OCI-LY7 (cell line): ENCODE measurements at regions of chr7 and their contacts with region 1.

Region 1: DNA sequence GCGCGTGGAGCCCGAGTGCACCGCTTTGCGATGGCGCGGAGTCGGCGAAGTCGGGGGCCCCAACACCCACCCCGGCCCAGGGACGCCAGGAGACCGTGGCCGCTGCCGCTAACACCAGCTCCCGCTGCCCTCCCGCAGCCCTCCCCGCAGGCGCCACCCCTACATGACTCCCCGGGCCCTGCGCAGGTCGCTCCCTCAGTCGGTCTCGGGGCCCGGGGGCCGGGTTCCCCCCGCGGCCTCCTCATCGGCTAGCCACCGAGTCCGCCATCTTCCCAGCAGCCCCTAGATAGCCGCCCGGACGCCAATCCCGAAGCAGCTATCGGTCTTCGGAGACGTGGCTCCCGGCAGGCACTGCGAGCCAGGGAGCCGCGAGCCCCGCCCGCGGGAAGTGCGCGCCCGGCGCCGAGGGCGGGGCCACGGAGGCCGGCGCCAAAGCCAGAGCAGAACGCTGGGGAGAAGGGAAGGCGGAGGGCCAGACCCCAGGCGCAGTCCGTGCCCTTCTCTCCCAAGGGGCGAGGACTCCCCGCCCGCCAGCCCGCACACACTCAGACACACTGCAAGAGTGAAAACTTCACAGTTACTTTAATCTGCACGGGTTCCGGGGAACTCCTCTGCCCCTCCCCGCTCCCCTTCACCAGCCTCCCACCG is at the start of gene FASTK:
- DNase-seq: peak; percentile 92
- H3K4me3 ChIP-seq: peak within 1 kb of the TSS; percentile 91
- H3K27ac ChIP-seq: peak within 1 kb of the TSS; percentile 72
- H3K4me1 ChIP-seq: peaks cover 54% of the 10 kb centered on the region
- CTCF ChIP-seq: no peak
- total RNA-seq, gene FASTK: 114 and 118 TPM in 2 replicates

Region 2: DNA sequence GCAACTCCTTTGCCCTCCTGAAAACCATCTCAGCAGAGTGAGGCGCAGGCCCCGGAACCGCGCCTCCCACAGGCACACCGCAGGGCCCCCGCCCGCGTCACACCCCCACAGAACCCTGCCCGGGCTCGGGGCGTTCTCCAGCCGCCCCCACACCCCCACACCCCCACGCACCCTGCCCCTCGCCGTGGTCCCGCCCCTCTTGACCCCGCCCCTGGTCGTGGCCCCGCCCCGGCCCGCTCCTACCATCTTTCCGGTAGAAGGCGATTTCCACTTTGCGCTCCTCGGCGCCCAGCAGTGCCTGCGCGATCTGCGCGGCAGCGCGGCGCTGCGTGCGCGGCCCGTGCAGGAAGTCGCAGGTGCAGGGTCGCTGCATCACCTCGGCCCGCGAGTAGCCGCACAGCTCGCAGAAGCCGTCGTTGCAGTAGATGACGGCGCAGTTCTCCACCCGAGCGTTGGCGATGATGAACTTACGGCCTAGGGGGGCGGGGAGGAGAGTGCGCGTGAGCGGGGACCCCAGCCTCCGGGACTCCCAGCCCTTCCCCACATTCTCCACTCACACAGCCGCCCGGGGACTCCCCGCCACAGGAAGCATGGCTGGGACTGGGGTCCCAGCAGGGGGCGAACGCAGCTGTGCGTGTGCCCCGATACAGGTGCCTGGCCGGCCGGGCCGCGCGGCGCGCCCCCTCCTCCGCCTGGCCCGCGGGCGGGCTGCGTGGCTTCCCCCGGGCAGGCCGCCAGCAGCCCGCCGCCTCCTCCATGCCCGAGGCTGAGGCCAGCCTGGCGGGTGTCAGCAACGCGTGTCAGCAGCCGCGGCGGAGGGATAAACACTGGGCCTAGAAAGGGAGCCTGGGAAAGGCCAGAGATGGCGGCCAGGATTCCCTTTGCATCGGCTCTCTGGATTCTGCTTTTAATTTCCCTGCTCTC is 105.9 kb before region 1 on chr7:
- CTCF ChIA-PET with region 1: no interaction called
- POLR2A ChIA-PET with region 1: no interaction called
- intact Hi-C with region 1: loop called (anchors 10 kb)
- DNase-seq: peak; percentile 92
- H3K4me3 ChIP-seq: peak overlapping the region; percentile 72
- H3K27ac ChIP-seq: peak overlapping the region; percentile 84
- H3K4me1 ChIP-seq: peaks cover 64% of the 10 kb centered on the region
- CTCF ChIP-seq: peak; percentile 67

Region 3: GRCh38 chr7:151028131-151028947 is 52.3 kb before region 1 on chr7 and contains the start of gene ABCB8:
- CTCF ChIA-PET with region 1: no interaction called
- POLR2A ChIA-PET with region 1: interaction called, 4 read pairs
- intact Hi-C with region 1: loop called (anchors 2 kb)
- DNase-seq: peak; percentile 99
- H3K4me3 ChIP-seq: peak within 1 kb of the TSS; percentile 80
- H3K27ac ChIP-seq: no peak within 1 kb of the TSS
- H3K4me1 ChIP-seq: peaks cover 23% of the 10 kb centered on the region
- CTCF ChIP-seq: peak; percentile 54
- total RNA-seq, gene ABCB8: 29.5 and 32.0 TPM in 2 replicates

Region 4: DNA sequence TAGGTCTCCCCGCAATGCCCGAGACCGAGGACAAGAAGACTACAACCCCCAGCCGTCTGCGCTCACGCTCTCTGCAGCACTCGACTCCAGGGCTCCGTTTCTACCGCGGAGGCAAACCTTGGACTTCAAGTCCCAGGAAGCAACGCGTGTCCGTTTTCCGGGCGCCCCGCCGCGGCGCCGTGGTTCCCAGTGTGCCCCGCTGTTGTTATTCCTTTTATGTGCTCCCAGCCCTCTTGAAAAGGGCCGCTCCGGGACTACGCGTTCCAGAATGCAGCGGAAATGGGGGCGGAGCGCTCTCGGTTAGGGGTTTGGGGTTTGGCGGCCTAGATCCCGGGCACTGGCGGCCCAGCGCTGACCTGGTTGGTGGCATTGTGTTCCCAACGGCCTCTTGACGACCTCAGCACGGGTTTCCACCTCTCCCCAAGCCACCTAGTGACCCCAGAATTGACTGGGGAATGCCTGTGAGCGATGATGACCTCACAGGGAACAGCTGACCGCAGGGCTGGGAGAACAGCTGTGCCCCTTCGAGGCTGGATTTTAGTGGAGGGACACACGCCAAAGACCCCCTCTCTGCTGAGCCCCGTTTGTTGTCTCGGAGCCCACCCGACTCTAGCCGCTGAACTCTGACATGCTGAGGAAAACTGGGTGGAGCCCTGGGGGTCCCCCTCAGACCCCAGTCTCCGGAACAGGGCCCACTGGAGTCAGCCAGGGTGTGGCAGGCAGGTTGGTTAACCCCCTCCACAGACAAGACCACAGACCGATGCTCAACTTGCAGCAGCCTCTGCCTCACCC is 22.5 kb before region 1 on chr7:
- CTCF ChIA-PET with region 1: interaction called, 4 read pairs
- POLR2A ChIA-PET with region 1: interaction called, 3 read pairs
- intact Hi-C with region 1: loop called (anchors 1 kb)
- DNase-seq: peak; percentile 99
- H3K4me3 ChIP-seq: peak overlapping the region; percentile 98
- H3K27ac ChIP-seq: peak overlapping the region; percentile 70
- H3K4me1 ChIP-seq: peaks cover 37% of the 10 kb centered on the region
- CTCF ChIP-seq: no peak

Region 5: GRCh38 chr7:151137076-151137675 is 56.5 kb after region 1 on chr7:
- CTCF ChIA-PET with region 1: no interaction called
- POLR2A ChIA-PET with region 1: no interaction called
- intact Hi-C with region 1: no loop called
- DNase-seq: no peak
- H3K4me3 ChIP-seq: no peak overlapping the region
- H3K27ac ChIP-seq: no peak overlapping the region
- H3K4me1 ChIP-seq: no peaks in the 10 kb centered on the region
- CTCF ChIP-seq: no peak

Region 6: GRCh38 chr7:151226875-151227782 is 146.5 kb after region 1 on chr7 and contains the start of gene ABCF2:
- CTCF ChIA-PET with region 1: no interaction called
- POLR2A ChIA-PET with region 1: interaction called, 3 read pairs
- intact Hi-C with region 1: loop called (anchors 5 kb)
- DNase-seq: peak; percentile 98
- H3K4me3 ChIP-seq: peak within 1 kb of the TSS; percentile 94
- H3K27ac ChIP-seq: peak within 1 kb of the TSS; percentile 8
- H3K4me1 ChIP-seq: peaks cover 32% of the 10 kb centered on the region
- CTCF ChIP-seq: peak; percentile 34; the same call in 1 of the 2 replicates
- total RNA-seq, gene ABCF2: 30.7 and 31.8 TPM in 2 replicates